ENCODE measurements at regions of chr6 and their contacts with region 1.

Region 1: GRCh38 chr6:149560736-149561135 is 5.4 kb upstream of the GINM1 start:
- DNase-seq: peak; percentile 53
- H3K4me3 ChIP-seq: no peak overlapping the region
- H3K27ac ChIP-seq: no peak overlapping the region
- H3K4me1 ChIP-seq: peaks cover 0 to 4% of the 10 kb centered on the region in 2 experiments; a peak in 2 of 4 replicates
- H3K27me3 ChIP-seq: no peaks in the 10 kb centered on the region
- CTCF ChIP-seq: peak; percentile 58
- EP300 ChIP-seq: no peak
- RAD21 ChIP-seq: no peak

Region 2: GRCh38 chr6:149316798-149317655 is 243.7 kb before region 1 on chr6:
- CTCF ChIA-PET with region 1: no interaction called
- POLR2A ChIA-PET with region 1: no interaction called
- DNase-seq: peak; percentile 93
- H3K4me3 ChIP-seq: peak overlapping the region; percentile 81 to 89
- H3K27ac ChIP-seq: peak overlapping the region; percentile 94 to 99
- H3K4me1 ChIP-seq: peaks cover 4 to 8% of the 10 kb centered on the region in 2 experiments; a peak in 2 of 4 replicates
- H3K27me3 ChIP-seq: no peaks in the 10 kb centered on the region
- CTCF ChIP-seq: peak; percentile 23; the same call in 1 of the 2 replicates
- EP300 ChIP-seq: peak in 1 of 2 experiments; percentile 17; a peak in 1 of 4 replicates
- RAD21 ChIP-seq: no peak

Region 3: DNA sequence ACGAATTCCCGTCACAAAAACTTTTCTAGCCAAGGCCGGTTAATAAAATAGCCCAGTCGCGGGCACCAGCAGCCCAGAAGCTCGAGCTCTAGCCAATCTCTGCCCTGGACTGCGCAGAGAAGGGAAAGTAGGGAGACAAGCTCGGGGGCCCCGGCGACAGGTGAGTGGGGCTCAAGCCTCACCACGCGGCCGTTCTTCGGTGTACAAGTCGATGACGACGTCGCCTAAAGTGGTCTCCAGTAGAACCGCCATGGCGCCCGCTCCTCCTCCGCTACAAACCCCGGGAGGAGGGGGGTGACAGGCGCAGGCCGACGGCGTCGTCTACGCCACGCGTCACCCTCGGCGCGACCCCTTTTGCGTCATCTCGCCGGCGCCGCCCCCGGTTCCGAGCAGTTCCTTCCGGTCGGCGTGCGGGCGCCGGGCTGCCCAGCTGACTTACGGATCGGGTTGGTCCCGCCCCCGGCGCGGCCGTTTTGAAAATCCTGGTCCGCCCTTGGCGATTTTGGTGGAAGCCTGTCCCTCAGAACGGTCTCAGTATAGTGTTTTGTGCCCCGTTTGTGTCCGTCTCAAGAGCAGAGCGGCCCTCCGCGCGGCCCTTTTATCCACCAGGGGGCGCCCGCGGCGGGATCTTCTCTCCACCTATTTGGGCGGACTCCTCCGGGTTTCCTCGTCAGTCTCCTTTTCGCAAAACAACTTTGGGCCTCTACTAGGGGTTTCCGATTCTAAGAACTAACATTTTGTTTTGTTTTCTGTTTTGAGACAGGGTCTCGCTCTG is 14.8 kb before region 1 on chr6 and contains the start of gene PPIL4:
- CTCF ChIA-PET with region 1: interaction called, 17 read pairs
- POLR2A ChIA-PET with region 1: interaction called, 3 read pairs
- DNase-seq: peak; percentile 96
- H3K4me3 ChIP-seq: peak within 1 kb of the TSS; percentile 92 to 100
- H3K27ac ChIP-seq: peak within 1 kb of the TSS; percentile 93 to 99
- H3K4me1 ChIP-seq: peaks cover 6 to 12% of the 10 kb centered on the region in 2 experiments; a peak in 3 of 4 replicates
- H3K27me3 ChIP-seq: no peaks in the 10 kb centered on the region
- CTCF ChIP-seq: peak; percentile 94
- EP300 ChIP-seq: no peak; a peak in 1 of 4 replicates
- RAD21 ChIP-seq: peak; percentile 45
- polyA plus RNA-seq, gene PPIL4: 3.3 and 3.9 TPM in 2 replicates